ENCODE measurements at regions of chr12 and their contacts with region 1.

Region 1: GRCh38 chr12:127925971-127926370 is 341.0 kb upstream of the TMEM132C start:
- DNase-seq: peak; percentile 7 to 49
- H3K4me3 ChIP-seq: no peak overlapping the region
- H3K27ac ChIP-seq: no peak overlapping the region
- H3K4me1 ChIP-seq: no peaks in the 10 kb centered on the region
- H3K27me3 ChIP-seq: no peaks in the 10 kb centered on the region
- CTCF ChIP-seq: peak; percentile 64 to 76 (median 76)
- EP300 ChIP-seq: no peak
- POLR2A ChIP-seq: no peak
- RAD21 ChIP-seq: peak; percentile 90 to 95

Region 2: GRCh38 chr12:127773520-127773919 is 152.5 kb before region 1 on chr12:
- CTCF ChIA-PET with region 1: interaction called, 12 read pairs
- POLR2A ChIA-PET with region 1: no interaction called
- DNase-seq: no peak
- H3K4me3 ChIP-seq: no peak overlapping the region
- H3K27ac ChIP-seq: no peak overlapping the region
- H3K4me1 ChIP-seq: peaks cover 0 to 5% (median 1%) of the 10 kb centered on the region in 4 experiments; a peak in 3 of 7 replicates
- H3K27me3 ChIP-seq: no peaks in the 10 kb centered on the region
- CTCF ChIP-seq: peak; percentile 59 to 97 (median 79)
- EP300 ChIP-seq: no peak
- POLR2A ChIP-seq: no peak
- RAD21 ChIP-seq: peak; percentile 67 to 76

Region 3: GRCh38 chr12:127779301-127780045 is 146.5 kb before region 1 on chr12:
- CTCF ChIA-PET with region 1: interaction called, 12 read pairs
- POLR2A ChIA-PET with region 1: no interaction called
- DNase-seq: no peak
- H3K4me3 ChIP-seq: no peak overlapping the region
- H3K27ac ChIP-seq: no peak overlapping the region
- H3K4me1 ChIP-seq: no peaks in the 10 kb centered on the region; a peak in 2 of 7 replicates
- H3K27me3 ChIP-seq: peaks cover 0 to 1% (median 0%) of the 10 kb centered on the region in 4 experiments; a peak in 1 of 7 replicates
- CTCF ChIP-seq: no peak
- EP300 ChIP-seq: no peak
- POLR2A ChIP-seq: no peak
- RAD21 ChIP-seq: no peak

Measured in H1 (cell line).